Ovary (tissue), 10 donors: ENCODE measurements at regions of chr13 and their contacts with region 1.

Region 1: DNA sequence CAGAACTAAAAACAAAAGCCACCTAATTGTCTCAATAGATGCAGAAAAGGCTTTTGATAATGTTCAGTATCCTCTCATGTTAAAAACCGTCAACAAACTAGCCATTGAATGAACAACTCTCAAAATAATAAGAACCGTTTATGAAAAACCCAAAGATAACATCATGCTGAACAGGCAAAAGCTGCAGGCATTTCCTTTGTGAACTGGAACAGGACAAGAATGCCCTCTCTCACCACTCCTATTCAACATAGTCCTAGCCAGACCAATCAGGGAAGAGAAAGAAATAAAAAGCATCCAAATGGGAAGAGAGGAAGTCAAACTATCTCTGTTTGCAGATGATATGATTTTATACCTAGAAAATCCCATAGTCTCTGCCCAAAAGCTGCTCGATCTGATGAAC is 179.6 kb upstream of the EDNRB start:
- DNase-seq: no peak
- H3K4me3 ChIP-seq: no peak overlapping the region
- H3K27ac ChIP-seq: no peak overlapping the region
- H3K4me1 ChIP-seq: peaks cover 1% of the 10 kb centered on the region
- H3K27me3 ChIP-seq: no peaks in the 10 kb centered on the region
- CTCF ChIP-seq: no peak
- EP300 ChIP-seq: no peak
- POLR2A ChIP-seq: no peak

Region 2: DNA sequence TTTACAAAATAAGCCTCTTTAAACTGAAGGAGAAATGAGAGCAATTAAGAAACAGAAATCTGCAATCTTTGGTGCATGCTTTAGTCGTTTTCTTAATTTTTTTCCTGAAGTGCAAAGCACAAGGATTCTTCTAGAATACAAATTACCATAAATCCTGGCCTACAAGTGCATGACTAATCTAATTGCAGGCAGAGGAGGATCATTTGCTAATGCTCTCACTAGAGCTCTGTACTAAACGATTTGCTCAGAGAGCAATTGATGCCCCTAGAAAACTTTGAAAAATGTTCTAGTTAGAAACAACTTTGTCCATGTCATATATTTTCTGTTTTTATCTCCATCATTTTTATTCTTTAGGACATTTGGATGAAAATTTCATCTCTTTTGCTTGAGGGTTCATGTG is 311.9 kb after region 1 on chr13:
- intact Hi-C with region 1: loop called in 1 of 4 experiments (anchors 5 kb)
- DNase-seq: no peak
- H3K4me3 ChIP-seq: no peak overlapping the region
- H3K27ac ChIP-seq: no peak overlapping the region
- H3K4me1 ChIP-seq: no peaks in the 10 kb centered on the region
- H3K27me3 ChIP-seq: no peaks in the 10 kb centered on the region
- CTCF ChIP-seq: no peak
- EP300 ChIP-seq: no peak
- POLR2A ChIP-seq: no peak